BJ (cell line): ENCODE measurements at regions of chr1 and their contacts with region 1.

Region 1: GRCh38 chr1:52686830-52687229 is 11.3 kb downstream of the COA7 start:
- DNase-seq: no peak
- H3K4me3 ChIP-seq: no peak overlapping the region
- H3K27me3 ChIP-seq: no peaks in the 10 kb centered on the region
- CTCF ChIP-seq: no peak

Region 2: DNA sequence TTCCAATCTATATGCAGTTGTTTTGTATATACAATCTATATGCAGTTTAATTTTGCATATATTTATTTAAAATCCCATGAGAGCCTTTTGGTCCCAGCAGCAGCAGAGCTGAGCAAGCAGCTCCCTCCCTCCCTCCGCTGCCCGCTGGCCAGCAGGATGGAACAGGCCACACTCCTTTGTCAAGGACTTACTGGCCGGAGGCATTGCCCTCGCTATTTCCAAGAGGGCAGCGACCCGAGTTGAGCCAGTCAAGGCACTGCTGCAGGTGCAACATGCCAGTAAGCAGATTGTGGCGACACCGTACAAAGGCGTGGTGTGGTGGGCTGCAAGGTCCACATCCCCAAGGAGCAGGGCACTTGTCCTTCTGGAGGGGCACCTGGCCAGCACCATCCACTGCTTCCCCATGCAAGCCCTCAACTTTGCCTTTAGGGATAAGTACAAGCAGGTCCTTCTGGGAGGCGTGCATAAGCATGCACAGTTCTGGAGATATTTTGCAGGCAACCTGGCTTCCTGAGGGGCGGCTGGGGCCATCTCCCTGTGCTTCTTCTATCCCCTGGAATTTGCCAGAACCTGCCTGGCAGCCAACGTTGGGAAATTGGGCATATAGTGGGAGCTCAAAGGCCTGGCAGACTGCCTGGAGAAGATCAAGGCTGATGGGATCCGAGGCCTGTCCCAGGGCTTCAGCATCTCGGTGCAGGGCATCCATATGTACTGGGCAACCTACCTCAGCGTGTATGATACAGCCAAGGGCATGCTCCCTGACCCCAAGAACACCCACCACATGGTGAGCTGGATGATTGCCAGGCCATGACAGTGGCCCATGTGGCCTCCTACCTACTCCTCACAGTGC is 977.7 kb before region 1 on chr1:
- CTCF ChIA-PET with region 1: no interaction called
- POLR2A ChIA-PET with region 1: no interaction called
- DNase-seq: no peak
- H3K4me3 ChIP-seq: no peak overlapping the region
- H3K27me3 ChIP-seq: no peaks in the 10 kb centered on the region
- CTCF ChIP-seq: no peak

Region 3: GRCh38 chr1:52552505-52553361 is 134.1 kb before region 1 on chr1 and contains the start of gene TUT4:
- CTCF ChIA-PET with region 1: no interaction called
- POLR2A ChIA-PET with region 1: no interaction called
- DNase-seq: no peak
- H3K4me3 ChIP-seq: peak within 1 kb of the TSS; percentile 96
- H3K27me3 ChIP-seq: no peaks in the 10 kb centered on the region
- CTCF ChIP-seq: peak; percentile 16; the same call in 1 of the 2 replicates
- polyA plus RNA-seq, gene TUT4: 17.6 and 27.9 TPM in 2 replicates

Region 4: GRCh38 chr1:52674497-52675384 is 12.1 kb before region 1 on chr1:
- CTCF ChIA-PET with region 1: interaction called, 14 read pairs
- POLR2A ChIA-PET with region 1: no interaction called
- DNase-seq: no peak
- H3K4me3 ChIP-seq: no peak overlapping the region
- H3K27me3 ChIP-seq: no peaks in the 10 kb centered on the region
- CTCF ChIP-seq: no peak